Ascending aorta (tissue), 2 donors: ENCODE measurements at regions of chr19 and their contacts with region 1.

Region 1: GRCh38 chr19:54189735-54190502 is 539 bp upstream of the MBOAT7 start:
- DNase-seq: peak; percentile 100
- H3K4me3 ChIP-seq: peak overlapping the region; percentile 81 to 85
- H3K27ac ChIP-seq: peak overlapping the region; percentile 100
- H3K4me1 ChIP-seq: peaks cover 6 to 20% of the 10 kb centered on the region in 2 donors
- H3K27me3 ChIP-seq: no peaks in the 10 kb centered on the region
- CTCF ChIP-seq: no peak

Region 2: DNA sequence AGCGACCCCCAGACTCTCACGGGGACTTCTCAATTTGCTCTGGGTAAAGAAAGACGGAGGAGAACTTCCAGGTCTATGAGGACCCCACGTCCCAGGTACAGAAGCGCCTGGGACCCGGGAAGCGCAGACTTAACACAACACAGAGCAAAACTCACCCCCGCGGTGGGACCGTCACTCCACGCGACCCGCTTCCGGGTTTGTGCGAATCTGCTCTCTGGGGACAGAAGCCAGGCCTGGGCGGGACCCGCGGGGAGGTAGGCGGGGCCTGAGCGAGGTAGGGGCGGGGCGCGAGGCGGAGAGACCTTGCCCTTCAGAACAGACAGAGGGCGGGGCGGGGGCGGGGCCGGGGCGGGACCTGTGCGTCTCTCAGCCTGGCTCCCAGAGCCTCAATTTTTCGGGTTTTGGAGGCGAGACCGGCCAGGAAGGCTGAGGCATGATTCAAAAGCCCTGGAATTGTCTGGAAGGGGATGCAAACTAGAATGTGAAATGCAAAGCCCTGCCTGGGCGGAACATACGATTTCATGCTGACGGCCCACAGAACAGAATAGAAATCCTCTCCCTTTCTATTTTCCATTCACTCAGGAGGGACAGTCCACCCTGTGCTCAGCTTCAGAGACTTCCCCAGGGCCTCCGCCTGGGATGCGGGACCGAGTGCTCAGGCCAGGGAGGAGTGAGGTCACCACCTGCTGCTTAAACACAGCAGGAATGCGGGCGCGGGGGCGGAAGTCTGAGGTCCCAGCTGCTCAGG is 1247.4 kb before region 1 on chr19:
- intact Hi-C with region 1: loop called (anchors 5 kb)
- DNase-seq: peak; percentile 81 to 98
- H3K4me3 ChIP-seq: peak overlapping the region; percentile 59 to 78
- H3K27ac ChIP-seq: peak overlapping the region; percentile 84 to 86
- H3K4me1 ChIP-seq: peaks cover 0 to 4% of the 10 kb centered on the region in 2 donors
- H3K27me3 ChIP-seq: no peaks in the 10 kb centered on the region
- CTCF ChIP-seq: no peak

Region 3: DNA sequence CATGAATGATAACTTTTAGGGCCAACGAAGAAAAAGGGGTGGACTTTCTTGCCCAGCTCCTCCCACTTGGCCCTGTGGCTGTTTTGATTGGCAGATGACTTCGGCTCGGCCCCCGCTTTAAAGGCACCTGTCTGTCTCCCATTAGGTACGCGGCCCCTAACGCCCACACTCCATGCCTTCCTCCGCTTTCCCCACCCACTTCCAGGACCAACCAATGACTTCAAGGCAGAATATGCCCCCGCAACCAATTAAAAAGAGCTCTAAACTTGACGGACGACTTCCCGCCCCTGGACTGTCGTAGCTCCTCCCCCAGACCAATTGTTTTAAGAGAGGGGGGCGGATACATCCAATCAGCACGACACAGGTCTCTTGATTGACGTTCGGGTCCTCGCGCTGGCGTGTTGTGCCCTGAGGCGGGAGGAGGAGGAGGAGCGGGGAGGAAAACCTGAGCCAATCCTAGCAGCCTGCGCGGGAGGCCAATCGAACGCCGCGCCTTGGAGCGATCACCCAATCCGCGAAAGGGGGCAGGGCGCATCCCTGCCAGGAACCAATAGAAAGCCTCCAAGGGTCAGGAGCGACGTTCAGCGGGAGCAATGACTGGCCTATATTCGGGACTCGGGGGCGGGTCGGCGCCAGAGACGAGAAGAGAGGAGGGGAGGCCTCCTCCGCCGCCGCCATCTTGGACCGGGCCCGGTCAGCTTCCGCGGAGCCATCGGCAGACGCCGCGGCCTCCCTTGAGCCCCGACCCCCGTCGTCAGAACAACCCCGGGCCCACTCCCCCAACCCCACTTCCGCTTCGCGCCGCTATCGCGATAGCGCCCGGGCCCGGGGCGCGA is 52.6 kb before region 1 on chr19 and contains the start of gene CNOT3:
- intact Hi-C with region 1: loop called (anchors 1 kb)
- DNase-seq: peak; percentile 100
- H3K4me3 ChIP-seq: peak within 1 kb of the TSS; percentile 95 to 98
- H3K27ac ChIP-seq: peak within 1 kb of the TSS; percentile 96 to 98
- H3K4me1 ChIP-seq: peaks cover 0 to 15% of the 10 kb centered on the region in 2 donors
- H3K27me3 ChIP-seq: no peaks in the 10 kb centered on the region
- CTCF ChIP-seq: no peak
- total RNA-seq, gene CNOT3: 69.1 TPM

Region 4: DNA sequence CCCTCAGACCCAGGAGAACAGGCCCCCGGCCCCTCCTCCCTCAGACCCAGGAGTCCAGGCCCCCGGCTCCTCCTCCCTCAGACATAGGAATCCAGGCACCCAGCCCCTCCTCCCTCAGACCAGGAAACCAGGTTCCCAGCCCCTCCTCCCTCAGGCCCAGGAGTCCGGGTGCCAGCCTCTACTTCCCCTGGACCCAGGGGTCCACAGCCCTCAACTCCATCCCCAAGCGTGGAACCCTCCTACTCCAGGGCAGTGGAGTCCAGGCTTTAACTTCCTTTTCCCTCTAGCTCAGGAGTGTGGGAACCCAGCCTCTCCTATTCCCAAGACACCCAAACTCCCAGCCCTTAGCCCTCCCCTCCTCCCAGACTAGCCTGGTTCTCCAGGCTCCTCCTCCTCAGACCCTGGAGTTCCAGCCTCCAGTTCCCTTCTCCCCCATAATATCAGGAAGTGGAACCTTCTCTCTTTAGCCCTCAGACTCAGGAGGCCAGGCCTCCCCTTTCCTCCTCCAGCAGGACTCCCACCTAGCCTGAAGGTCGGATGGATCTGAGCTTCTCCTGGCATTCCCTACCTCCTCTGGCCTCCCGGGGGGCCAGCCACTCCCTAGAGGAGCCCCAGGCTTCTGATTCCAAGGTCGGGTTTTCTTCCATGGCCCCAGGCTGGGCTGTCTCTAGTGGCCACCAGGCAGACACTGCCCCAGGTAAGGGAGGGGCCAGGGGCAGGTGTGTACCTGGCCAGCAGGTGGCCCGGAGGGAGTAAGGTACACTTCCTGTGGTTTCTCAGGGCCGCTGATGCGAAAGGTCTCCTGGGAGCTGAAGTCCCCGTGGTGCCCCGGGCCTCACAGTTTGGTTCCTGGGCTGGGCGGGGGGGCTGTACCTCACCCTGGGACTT is 17.2 kb before region 1 on chr19 and contains the start of gene TMC4:
- intact Hi-C with region 1: no loop called
- DNase-seq: no peak
- H3K4me3 ChIP-seq: peak within 1 kb of the TSS in 1 of 2 donors; percentile 2
- H3K27ac ChIP-seq: peak within 1 kb of the TSS in 1 of 2 donors; percentile 8
- H3K4me1 ChIP-seq: peaks cover 0 to 2% of the 10 kb centered on the region in 2 donors
- H3K27me3 ChIP-seq: no peaks in the 10 kb centered on the region
- CTCF ChIP-seq: no peak
- total RNA-seq, gene TMC4: 7.1 TPM

Region 5: GRCh38 chr19:54203151-54203611 is 13.3 kb after region 1 on chr19:
- intact Hi-C with region 1: loop called (anchors 1 kb)
- DNase-seq: no peak
- H3K4me3 ChIP-seq: no peak overlapping the region
- H3K27ac ChIP-seq: no peak overlapping the region
- H3K4me1 ChIP-seq: peaks cover 6 to 23% of the 10 kb centered on the region in 2 donors
- H3K27me3 ChIP-seq: no peaks in the 10 kb centered on the region
- CTCF ChIP-seq: no peak

Region 6: GRCh38 chr19:55653758-55654539 is 1464.0 kb after region 1 on chr19:
- intact Hi-C with region 1: loop called (anchors 10 kb)
- DNase-seq: peak; percentile 98 to 100
- H3K4me3 ChIP-seq: peak overlapping the region; percentile 77 to 89
- H3K27ac ChIP-seq: peak overlapping the region; percentile 97
- H3K4me1 ChIP-seq: peaks cover 20 to 36% of the 10 kb centered on the region in 2 donors
- H3K27me3 ChIP-seq: no peaks in the 10 kb centered on the region
- CTCF ChIP-seq: peak; percentile 94 to 100 (median 96)